Ascending aorta (tissue), 2 donors: ENCODE measurements at regions of chr2 and their contacts with region 1.

Region 1: GRCh38 chr2:238426568-238427434 is at the start of gene ASB1:
- DNase-seq: peak; percentile 30 to 91
- H3K4me3 ChIP-seq: peak within 1 kb of the TSS; percentile 52 to 90
- H3K27ac ChIP-seq: peak within 1 kb of the TSS; percentile 95 to 97
- H3K4me1 ChIP-seq: peaks cover 7 to 15% of the 10 kb centered on the region in 2 donors
- H3K27me3 ChIP-seq: no peaks in the 10 kb centered on the region
- CTCF ChIP-seq: peak in 1 of 3 experiments; percentile 8
- total RNA-seq, gene ASB1: 32.5 TPM

Region 2: DNA sequence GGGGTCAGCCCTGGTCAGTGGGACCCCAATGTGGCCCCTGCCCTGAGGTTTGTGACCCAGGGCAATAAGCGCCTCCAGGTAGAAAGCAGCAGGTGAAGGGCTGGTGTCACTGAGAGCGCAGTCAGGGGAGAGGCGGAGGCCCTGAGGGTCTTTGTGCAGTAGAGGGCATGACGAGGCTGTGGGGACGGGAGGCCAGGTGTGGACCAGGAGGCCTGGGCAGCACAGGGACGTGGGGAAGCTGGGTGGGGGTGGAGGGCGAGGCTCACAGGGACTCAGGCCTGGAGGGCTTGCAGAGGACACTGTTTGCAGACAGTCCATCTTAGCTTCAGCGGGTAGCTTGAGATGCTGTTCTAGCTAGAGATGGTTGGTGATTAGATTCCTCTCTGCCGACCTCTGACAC is 74.4 kb before region 1 on chr2:
- intact Hi-C with region 1: no loop called
- DNase-seq: no peak
- H3K4me3 ChIP-seq: no peak overlapping the region
- H3K27ac ChIP-seq: no peak overlapping the region
- H3K4me1 ChIP-seq: no peaks in the 10 kb centered on the region
- H3K27me3 ChIP-seq: no peaks in the 10 kb centered on the region
- CTCF ChIP-seq: no peak

Region 3: DNA sequence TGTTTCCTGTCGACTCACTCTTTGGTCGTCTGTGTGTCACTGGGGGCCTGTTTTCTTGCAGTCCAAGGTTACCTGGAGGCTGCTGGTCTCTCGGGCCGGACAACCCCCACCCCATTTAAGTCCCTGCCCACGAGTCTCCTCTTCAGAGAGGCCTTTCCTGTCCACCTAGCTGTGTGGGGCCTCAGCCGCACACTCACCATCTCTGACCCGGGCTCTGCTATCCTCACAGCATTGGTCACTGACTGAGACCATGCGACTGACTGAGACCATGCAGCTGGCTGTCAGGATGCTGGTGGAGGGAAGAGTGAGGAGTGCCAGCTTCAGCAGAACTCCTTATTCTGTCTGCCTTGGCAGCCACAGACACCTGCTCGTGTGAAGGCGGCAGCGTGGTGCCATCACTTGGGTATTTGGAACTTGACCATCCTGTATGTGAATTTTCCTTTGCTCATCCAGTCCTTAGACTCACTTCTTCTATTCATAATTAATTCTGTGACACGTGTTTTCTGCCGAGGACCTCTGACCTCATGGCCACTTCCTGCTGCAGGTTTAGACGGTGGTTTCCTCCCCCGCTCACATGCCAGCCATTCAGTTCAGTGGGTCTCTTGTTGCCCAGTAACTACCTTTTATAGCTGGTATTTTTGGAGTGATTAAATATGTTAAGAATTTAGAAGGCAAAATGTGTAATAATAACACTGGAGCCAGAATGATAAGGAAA is 47.5 kb before region 1 on chr2:
- intact Hi-C with region 1: loop called (anchors 5 kb)
- DNase-seq: peak in 1 of 2 donors; percentile 79
- H3K4me3 ChIP-seq: no peak overlapping the region
- H3K27ac ChIP-seq: peak overlapping the region; percentile 55 to 84
- H3K4me1 ChIP-seq: peaks cover 12 to 28% of the 10 kb centered on the region in 2 donors
- H3K27me3 ChIP-seq: no peaks in the 10 kb centered on the region
- CTCF ChIP-seq: no peak

Region 4: DNA sequence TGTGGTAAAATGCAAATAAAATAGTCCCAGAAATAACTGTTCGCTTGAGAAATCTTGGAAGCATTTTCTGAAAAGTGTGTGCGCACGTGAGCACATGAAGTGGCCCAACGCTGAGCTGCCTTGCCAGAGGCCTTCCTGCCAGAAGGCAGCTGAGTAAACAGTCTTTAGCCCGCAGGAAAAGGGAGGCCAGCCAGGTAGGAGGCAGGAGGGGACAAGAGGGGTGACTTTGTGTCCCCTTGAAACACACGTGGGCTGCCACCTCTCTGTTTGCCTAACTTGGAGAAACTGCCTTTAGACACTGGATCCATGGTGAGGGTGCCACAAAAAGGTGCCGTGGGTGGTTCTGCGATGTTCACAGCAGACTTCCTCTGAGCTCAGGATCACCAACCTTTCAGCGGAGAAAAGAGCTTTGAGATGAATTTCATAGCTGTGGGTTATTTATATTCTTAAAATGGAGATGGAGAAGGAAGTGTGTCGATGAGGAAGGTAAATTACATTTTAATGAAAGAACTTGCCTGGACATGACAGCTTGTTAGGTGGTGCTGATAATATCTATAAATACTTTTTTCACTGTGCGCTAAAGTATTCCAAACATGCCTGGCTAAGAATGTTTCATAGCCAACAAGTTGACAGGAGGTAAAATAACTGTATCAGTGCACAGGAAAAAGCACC is 36.7 kb before region 1 on chr2:
- intact Hi-C with region 1: loop called (anchors 5 kb)
- DNase-seq: no peak
- H3K4me3 ChIP-seq: no peak overlapping the region
- H3K27ac ChIP-seq: peak overlapping the region; percentile 69 to 73
- H3K4me1 ChIP-seq: peaks cover 2 to 16% of the 10 kb centered on the region in 2 donors
- H3K27me3 ChIP-seq: no peaks in the 10 kb centered on the region
- CTCF ChIP-seq: no peak

Region 5: GRCh38 chr2:238606311-238606710 is 179.5 kb after region 1 on chr2:
- intact Hi-C with region 1: no loop called
- DNase-seq: no peak
- H3K4me3 ChIP-seq: no peak overlapping the region
- H3K27ac ChIP-seq: no peak overlapping the region
- H3K4me1 ChIP-seq: peaks cover 0 to 16% of the 10 kb centered on the region in 2 donors
- H3K27me3 ChIP-seq: no peaks in the 10 kb centered on the region
- CTCF ChIP-seq: no peak